ENCODE measurements at regions of chr1 and their contacts with region 1.

Region 1: GRCh38 chr1:71049951-71050598 is 2.5 kb upstream of the PTGER3 start:
- DNase-seq: peak; percentile 69
- H3K4me3 Mint-ChIP-seq: no peak overlapping the region
- H3K27ac Mint-ChIP-seq: no peak overlapping the region
- H3K4me1 Mint-ChIP-seq: no peaks in the 10 kb centered on the region
- H3K27me3 Mint-ChIP-seq: peaks cover 47% of the 10 kb centered on the region
- CTCF ChIP-seq: peak; percentile 58

Region 2: GRCh38 chr1:70142075-70142474 is 908.0 kb before region 1 on chr1:
- CTCF ChIA-PET with region 1: interaction called, 3 read pairs
- POLR2A ChIA-PET with region 1: no interaction called
- intact Hi-C with region 1: loop called (anchors 5 kb)
- DNase-seq: no peak
- H3K4me3 Mint-ChIP-seq: no peak overlapping the region
- H3K27ac Mint-ChIP-seq: no peak overlapping the region
- H3K4me1 Mint-ChIP-seq: peaks cover 5% of the 10 kb centered on the region
- H3K27me3 Mint-ChIP-seq: no peaks in the 10 kb centered on the region
- CTCF ChIP-seq: peak; percentile 29

Region 3: GRCh38 chr1:70978623-70979022 is 71.5 kb before region 1 on chr1:
- CTCF ChIA-PET with region 1: no interaction called
- POLR2A ChIA-PET with region 1: no interaction called
- intact Hi-C with region 1: no loop called
- DNase-seq: no peak
- H3K4me3 Mint-ChIP-seq: no peak overlapping the region
- H3K27ac Mint-ChIP-seq: no peak overlapping the region
- H3K4me1 Mint-ChIP-seq: no peaks in the 10 kb centered on the region
- H3K27me3 Mint-ChIP-seq: peaks cover 43% of the 10 kb centered on the region
- CTCF ChIP-seq: no peak

Measured in MCF 10A (cell line).